ENCODE measurements at regions of chr22 and their contacts with region 1.

Region 1: GRCh38 chr22:40637183-40638150 is 948 bp upstream of the MRTFA start:
- DNase-seq: peak; percentile 65
- ATAC-seq: peak; percentile 31

Region 2: GRCh38 chr22:40525249-40525884 is 112.1 kb before region 1 on chr22:
- intact Hi-C with region 1: loop called (anchors 1 kb)
- DNase-seq: no peak
- ATAC-seq: peak; percentile 67

Region 3: GRCh38 chr22:40583053-40583741 is 54.3 kb before region 1 on chr22:
- intact Hi-C with region 1: no loop called
- DNase-seq: no peak
- ATAC-seq: no peak

Measured in sciatic nerve (tissue), 2 donors.